Gastrocnemius medialis (tissue), 4 donors: ENCODE measurements at regions of chr16 and their contacts with region 1.

Region 1: GRCh38 chr16:28846080-28846932 is at the start of gene TUFM:
- DNase-seq: peak; percentile 98
- ATAC-seq: peak; percentile 93 to 96
- H3K4me3 ChIP-seq: peak within 1 kb of the TSS; percentile 93 to 100 (median 98)
- H3K27ac ChIP-seq: peak within 1 kb of the TSS; percentile 92 to 96 (median 94)
- H3K4me1 ChIP-seq: peaks cover 20 to 24% of the 10 kb centered on the region in 2 donors
- H3K27me3 ChIP-seq: no peaks in the 10 kb centered on the region
- CTCF ChIP-seq: peak; percentile 36 to 81 (median 70)
- POLR2A ChIP-seq: peak; percentile 72 to 80
- total RNA-seq, gene TUFM: 140 to 196 (median 167) TPM

Region 2: GRCh38 chr16:28553776-28554633 is 292.3 kb before region 1 on chr16 and contains the start of gene SGF29:
- in situ Hi-C with region 1: loop called in 1 of 4 experiments (anchors 25 kb)
- intact Hi-C with region 1: no loop called
- DNase-seq: peak; percentile 87 to 91
- ATAC-seq: peak; percentile 97 to 98
- H3K4me3 ChIP-seq: peak within 1 kb of the TSS; percentile 66 to 71 (median 70)
- H3K27ac ChIP-seq: peak within 1 kb of the TSS; percentile 92 to 94 (median 94)
- H3K4me1 ChIP-seq: peaks cover 12 to 15% of the 10 kb centered on the region in 2 donors
- H3K27me3 ChIP-seq: no peaks in the 10 kb centered on the region
- CTCF ChIP-seq: peak in 4 of 5 experiments; percentile 16 to 42 (median 30)
- POLR2A ChIP-seq: peak; percentile 89 to 96
- total RNA-seq, gene SGF29: 35.1 to 50.4 (median 41.9) TPM

Region 3: GRCh38 chr16:28823872-28824716 is 22.2 kb before region 1 on chr16:
- in situ Hi-C with region 1: no loop called
- intact Hi-C with region 1: loop called (anchors 1 kb)
- DNase-seq: peak; percentile 98
- ATAC-seq: peak; percentile 81 to 84
- H3K4me3 ChIP-seq: peak overlapping the region; percentile 89 to 99 (median 96)
- H3K27ac ChIP-seq: peak overlapping the region; percentile 99 to 100 (median 100)
- H3K4me1 ChIP-seq: peaks cover 20% of the 10 kb centered on the region in 2 donors
- H3K27me3 ChIP-seq: no peaks in the 10 kb centered on the region
- CTCF ChIP-seq: peak in 4 of 5 experiments; percentile 41 to 45 (median 44)
- POLR2A ChIP-seq: peak; percentile 79 to 84

Region 4: DNA sequence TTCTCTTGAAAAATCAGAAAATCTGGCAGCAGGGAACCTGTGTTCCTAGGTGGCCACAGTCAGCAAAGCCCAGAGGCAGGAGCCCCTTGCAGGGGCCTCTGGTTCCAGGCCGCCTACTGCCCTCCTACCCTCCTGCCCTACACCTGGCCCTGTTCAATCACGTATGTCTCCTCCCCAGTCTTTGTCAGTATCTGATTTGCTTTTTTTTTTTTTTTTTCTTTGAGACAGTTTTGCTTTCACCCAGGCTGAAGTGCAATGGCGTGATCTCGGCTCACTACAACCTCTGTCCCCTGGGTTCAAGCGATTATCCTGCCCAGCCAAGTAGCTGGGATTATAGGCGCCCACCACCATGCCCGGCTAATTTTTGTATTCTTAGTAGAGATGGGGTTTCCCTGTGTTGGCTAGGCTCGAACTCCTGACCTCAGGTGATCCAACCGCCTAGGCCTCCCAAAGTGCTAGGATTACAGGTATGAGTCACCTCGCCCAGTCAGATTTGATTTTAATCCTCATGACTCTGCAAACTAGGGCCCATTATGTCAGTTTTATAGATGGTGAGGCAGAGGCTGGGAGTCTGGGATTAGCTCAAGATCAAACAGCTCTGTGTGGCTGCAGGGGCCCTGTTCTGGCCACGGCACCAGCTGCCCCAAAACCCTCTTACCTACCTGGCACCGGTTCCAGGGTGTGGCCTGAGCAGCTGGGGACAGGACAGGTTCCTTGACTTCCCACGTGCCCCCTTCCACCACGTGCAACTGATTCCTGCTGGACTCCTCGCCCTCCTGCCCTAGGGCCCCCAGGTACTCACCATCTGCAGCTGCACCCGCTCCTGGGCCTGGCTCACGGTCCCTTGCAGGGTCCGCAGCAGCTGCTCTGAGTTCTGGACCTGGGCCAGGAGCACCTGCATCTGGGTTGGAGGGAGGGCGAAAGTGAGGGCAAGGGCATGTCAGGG is 64.1 kb after region 1 on chr16:
- in situ Hi-C with region 1: no loop called
- intact Hi-C with region 1: no loop called
- DNase-seq: no peak
- ATAC-seq: peak; percentile 45 to 49
- H3K4me3 ChIP-seq: no peak overlapping the region
- H3K27ac ChIP-seq: peak overlapping the region; percentile 7 to 52 (median 28)
- H3K4me1 ChIP-seq: no peaks in the 10 kb centered on the region
- H3K27me3 ChIP-seq: no peaks in the 10 kb centered on the region
- CTCF ChIP-seq: no peak
- POLR2A ChIP-seq: no peak

Region 5: GRCh38 chr16:28924732-28925385 is 78.6 kb after region 1 on chr16 and contains the start of gene RABEP2:
- in situ Hi-C with region 1: no loop called
- intact Hi-C with region 1: loop called (anchors 2 kb)
- DNase-seq: peak; percentile 77 to 89
- ATAC-seq: peak; percentile 91 to 96
- H3K4me3 ChIP-seq: peak within 1 kb of the TSS; percentile 67 to 99 (median 86)
- H3K27ac ChIP-seq: peak within 1 kb of the TSS; percentile 83 to 99 (median 94)
- H3K4me1 ChIP-seq: peaks cover 9% of the 10 kb centered on the region in 2 donors
- H3K27me3 ChIP-seq: no peaks in the 10 kb centered on the region
- CTCF ChIP-seq: no peak
- POLR2A ChIP-seq: peak; percentile 63 to 69
- total RNA-seq, gene RABEP2: 2.9 to 13.9 (median 6.4) TPM